Stomach (tissue), 19 donors: ENCODE measurements at regions of chr9 and their contacts with region 1.

Region 1: DNA sequence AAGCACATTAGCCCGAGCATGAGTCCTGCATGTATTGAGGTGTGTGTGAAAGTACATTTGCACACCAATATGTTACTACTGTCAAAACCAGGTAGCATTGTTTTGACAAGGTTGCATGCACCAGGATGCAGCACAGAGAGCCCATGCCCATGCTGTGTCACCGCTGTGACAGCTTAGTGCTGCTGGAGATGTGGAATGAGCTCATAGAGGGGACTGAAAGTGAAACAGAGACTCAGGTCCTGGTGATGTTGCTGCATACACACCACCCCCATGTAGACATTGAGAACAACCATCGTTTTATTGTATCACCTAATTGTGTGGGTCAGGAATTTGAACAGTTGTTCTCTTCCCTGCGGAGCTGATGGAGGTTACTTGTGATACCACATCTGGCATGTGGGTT is 53.0 kb downstream of the GADD45G start:
- DNase-seq: no peak
- H3K4me3 ChIP-seq: no peak overlapping the region
- H3K27ac ChIP-seq: no peak overlapping the region
- H3K4me1 ChIP-seq: peaks cover 23 to 62% (median 42%) of the 10 kb centered on the region in 4 donors
- H3K27me3 ChIP-seq: no peaks in the 10 kb centered on the region
- CTCF ChIP-seq: no peak
- EP300 ChIP-seq: no peak
- POLR2A ChIP-seq: no peak

Region 2: GRCh38 chr9:89710697-89711096 is 52.9 kb after region 1 on chr9:
- intact Hi-C with region 1: loop called (anchors 10 kb)
- DNase-seq: peak in 1 of 2 donors; percentile 62
- H3K4me3 ChIP-seq: no peak overlapping the region
- H3K27ac ChIP-seq: peak overlapping the region in 3 of 5 donors; percentile 37 to 69 (median 38)
- H3K4me1 ChIP-seq: peaks cover 0 to 14% (median 8%) of the 10 kb centered on the region in 4 donors
- H3K27me3 ChIP-seq: no peaks in the 10 kb centered on the region
- CTCF ChIP-seq: no peak
- EP300 ChIP-seq: no peak
- POLR2A ChIP-seq: no peak

Region 3: DNA sequence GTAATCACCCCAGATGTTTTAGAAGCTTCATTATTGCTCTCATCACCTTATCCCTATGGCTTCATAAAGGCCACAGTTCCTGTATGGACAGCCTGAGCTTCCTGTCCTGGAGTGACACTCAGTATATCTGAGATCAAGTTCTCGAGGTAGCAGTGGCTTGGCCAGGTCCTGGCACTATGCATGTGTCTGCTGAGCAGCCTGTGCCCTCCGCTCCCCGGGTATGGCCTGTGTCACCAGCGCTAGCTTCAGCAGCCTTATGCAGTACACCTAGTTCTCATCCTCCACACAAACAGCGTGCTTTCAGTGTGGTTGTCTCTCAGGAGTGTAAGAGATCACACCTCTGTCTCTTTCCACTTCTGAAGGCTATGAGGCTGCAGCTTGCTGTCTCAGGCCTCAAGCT is 470.2 kb after region 1 on chr9:
- intact Hi-C with region 1: no loop called
- DNase-seq: no peak
- H3K4me3 ChIP-seq: no peak overlapping the region
- H3K27ac ChIP-seq: no peak overlapping the region
- H3K4me1 ChIP-seq: no peaks in the 10 kb centered on the region
- H3K27me3 ChIP-seq: peaks cover 0 to 12% (median 0%) of the 10 kb centered on the region in 3 donors
- CTCF ChIP-seq: no peak
- EP300 ChIP-seq: no peak
- POLR2A ChIP-seq: no peak